CD8-positive, alpha-beta T cell (primary cell): ENCODE measurements at regions of chr18 and their contacts with region 1.

Region 1: GRCh38 chr18:24726727-24727492 is 266.5 kb downstream of the HRH4 start:
- DNase-seq: peak; percentile 14 to 72 (median 47)
- ATAC-seq: no peak
- H3K4me3 ChIP-seq: no peak overlapping the region
- H3K4me3 Mint-ChIP-seq: no peak overlapping the region
- H3K27ac ChIP-seq: no peak overlapping the region
- H3K27ac Mint-ChIP-seq: no peak overlapping the region
- H3K4me1 ChIP-seq: no peaks in the 10 kb centered on the region
- H3K4me1 Mint-ChIP-seq: no peaks in the 10 kb centered on the region
- H3K27me3 ChIP-seq: no peaks in the 10 kb centered on the region
- H3K27me3 Mint-ChIP-seq: peaks cover 15% of the 10 kb centered on the region
- CTCF ChIP-seq: peak; percentile 77

Region 2: GRCh38 chr18:24362758-24363157 is 364.2 kb before region 1 on chr18:
- CTCF ChIA-PET with region 1: interaction called, 10 read pairs
- POLR2A ChIA-PET with region 1: no interaction called
- intact Hi-C with region 1: loop called in 1 of 2 experiments (anchors 1 kb)
- DNase-seq: no peak
- ATAC-seq: no peak
- H3K4me3 ChIP-seq: no peak overlapping the region
- H3K4me3 Mint-ChIP-seq: no peak overlapping the region
- H3K27ac ChIP-seq: no peak overlapping the region
- H3K27ac Mint-ChIP-seq: no peak overlapping the region
- H3K4me1 ChIP-seq: no peaks in the 10 kb centered on the region
- H3K4me1 Mint-ChIP-seq: no peaks in the 10 kb centered on the region
- H3K27me3 ChIP-seq: no peaks in the 10 kb centered on the region
- H3K27me3 Mint-ChIP-seq: no peaks in the 10 kb centered on the region
- CTCF ChIP-seq: no peak

Region 3: DNA sequence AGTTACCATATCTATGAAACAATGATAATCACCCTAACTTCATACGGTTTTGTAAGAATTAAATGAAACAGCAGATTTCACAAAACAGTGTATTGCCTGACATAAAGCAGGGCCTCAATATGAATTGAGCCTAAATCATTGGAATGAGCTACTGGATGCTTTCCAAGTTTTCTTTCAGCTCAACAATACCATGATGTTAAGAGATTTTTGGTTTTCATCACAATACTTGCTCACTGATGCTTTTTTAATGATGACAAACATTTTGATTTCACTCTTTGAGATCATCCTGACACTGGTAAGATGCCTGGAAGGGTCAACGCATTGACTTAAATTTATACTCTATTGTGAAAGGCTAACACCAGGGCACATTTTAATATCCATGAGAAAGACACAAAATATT is 247.5 kb after region 1 on chr18:
- CTCF ChIA-PET with region 1: no interaction called
- POLR2A ChIA-PET with region 1: no interaction called
- intact Hi-C with region 1: no loop called
- DNase-seq: no peak
- ATAC-seq: no peak
- H3K4me3 ChIP-seq: no peak overlapping the region
- H3K4me3 Mint-ChIP-seq: no peak overlapping the region
- H3K27ac ChIP-seq: no peak overlapping the region
- H3K27ac Mint-ChIP-seq: no peak overlapping the region
- H3K4me1 ChIP-seq: no peaks in the 10 kb centered on the region
- H3K4me1 Mint-ChIP-seq: no peaks in the 10 kb centered on the region
- H3K27me3 ChIP-seq: no peaks in the 10 kb centered on the region
- H3K27me3 Mint-ChIP-seq: peaks cover 2% of the 10 kb centered on the region
- CTCF ChIP-seq: no peak

Region 4: GRCh38 chr18:25467226-25467987 is 740.5 kb after region 1 on chr18:
- CTCF ChIA-PET with region 1: no interaction called
- POLR2A ChIA-PET with region 1: no interaction called
- intact Hi-C with region 1: no loop called
- DNase-seq: no peak
- ATAC-seq: no peak
- H3K4me3 ChIP-seq: no peak overlapping the region
- H3K4me3 Mint-ChIP-seq: no peak overlapping the region
- H3K27ac ChIP-seq: no peak overlapping the region
- H3K27ac Mint-ChIP-seq: no peak overlapping the region
- H3K4me1 ChIP-seq: no peaks in the 10 kb centered on the region
- H3K4me1 Mint-ChIP-seq: no peaks in the 10 kb centered on the region
- H3K27me3 ChIP-seq: no peaks in the 10 kb centered on the region
- H3K27me3 Mint-ChIP-seq: no peaks in the 10 kb centered on the region
- CTCF ChIP-seq: no peak